Caki2 (cell line): ENCODE measurements at regions of chr10 and their contacts with region 1.

Region 1: GRCh38 chr10:100562008-100562711 is 26.4 kb downstream of the HIF1AN start:
- DNase-seq: peak; percentile 49

Region 2: DNA sequence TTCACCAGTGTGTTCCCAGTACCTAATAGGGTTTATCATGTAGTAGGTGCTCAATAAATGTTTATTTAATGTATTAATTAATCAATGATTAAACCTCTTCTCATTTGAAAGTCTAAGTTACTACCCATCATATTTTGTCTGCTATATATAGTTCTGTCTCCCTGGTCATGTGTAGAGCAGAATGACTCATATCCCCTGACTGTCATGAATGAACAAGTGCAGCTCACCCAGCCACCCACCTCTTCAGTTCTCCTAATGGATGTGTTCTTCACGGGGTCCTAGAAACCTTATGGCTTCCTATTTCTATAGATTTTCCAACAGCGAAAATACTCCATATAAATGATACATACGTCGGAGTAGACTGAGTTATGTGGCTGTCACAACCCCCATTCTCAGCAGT is 38.1 kb after region 1 on chr10:
- in situ Hi-C with region 1: no loop called
- DNase-seq: peak; percentile 25

Region 3: GRCh38 chr10:100637785-100638184 is 75.6 kb after region 1 on chr10:
- in situ Hi-C with region 1: no loop called
- DNase-seq: no peak

Region 4: DNA sequence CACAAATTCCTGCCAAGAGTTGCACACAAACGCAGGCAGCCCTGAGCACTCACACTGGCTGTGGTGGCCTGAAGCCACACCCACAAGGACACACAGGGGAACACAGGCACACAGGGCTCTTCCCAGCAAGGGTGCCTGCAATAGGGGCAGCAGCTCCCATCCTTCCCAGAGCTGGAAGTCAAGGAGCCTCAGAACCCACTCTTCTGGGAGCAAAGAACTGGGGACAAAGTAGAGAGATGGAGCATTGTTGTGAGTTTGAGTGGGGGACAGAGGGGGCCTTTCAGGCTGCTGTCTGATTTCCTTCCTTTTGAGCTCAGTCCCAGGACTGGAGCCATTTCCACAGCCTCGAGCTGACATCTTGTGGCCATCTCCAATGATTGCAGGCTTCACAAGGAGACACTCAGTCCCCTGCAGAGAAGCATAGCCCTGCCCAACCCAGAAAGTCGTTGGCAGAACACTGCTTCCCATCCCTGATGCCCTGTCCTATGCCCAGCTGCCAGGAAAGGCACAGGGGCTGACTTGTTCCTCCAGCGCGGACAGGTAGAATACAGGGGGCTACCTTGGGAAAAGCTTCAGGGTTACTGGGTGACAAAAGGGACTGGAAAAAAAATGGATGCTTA is 316.2 kb after region 1 on chr10:
- in situ Hi-C with region 1: loop called (anchors 25 kb)
- DNase-seq: peak; percentile 73